Lower leg skin (tissue), 4 donors: ENCODE measurements at regions of chr10 and their contacts with region 1.

Region 1: GRCh38 chr10:49194212-49194920 is 6.2 kb upstream of the TMEM273 start:
- DNase-seq: peak in 1 of 2 donors; percentile 6
- H3K4me3 ChIP-seq: no peak overlapping the region
- CTCF ChIP-seq: no peak
- POLR2A ChIP-seq: no peak

Region 2: GRCh38 chr10:48759113-48759901 is 435.1 kb before region 1 on chr10:
- intact Hi-C with region 1: loop called (anchors 5 kb)
- DNase-seq: no peak
- H3K4me3 ChIP-seq: no peak overlapping the region
- CTCF ChIP-seq: no peak
- POLR2A ChIP-seq: no peak

Region 3: GRCh38 chr10:49053053-49053997 is 141.0 kb before region 1 on chr10:
- intact Hi-C with region 1: no loop called
- DNase-seq: peak; percentile 45 to 89
- H3K4me3 ChIP-seq: no peak overlapping the region
- CTCF ChIP-seq: no peak
- POLR2A ChIP-seq: no peak